ENCODE measurements at regions of chr13 and their contacts with region 1.

Region 1: GRCh38 chr13:79538757-79539156 is 57.8 kb downstream of the NDFIP2 start:
- DNase-seq: no peak
- H3K4me3 ChIP-seq: no peak overlapping the region
- H3K27ac ChIP-seq: no peak overlapping the region
- H3K4me1 ChIP-seq: peaks cover 0 to 4% (median 0%) of the 10 kb centered on the region in 4 donors
- H3K27me3 ChIP-seq: no peaks in the 10 kb centered on the region
- CTCF ChIP-seq: no peak
- EP300 ChIP-seq: no peak
- POLR2A ChIP-seq: no peak

Region 2: DNA sequence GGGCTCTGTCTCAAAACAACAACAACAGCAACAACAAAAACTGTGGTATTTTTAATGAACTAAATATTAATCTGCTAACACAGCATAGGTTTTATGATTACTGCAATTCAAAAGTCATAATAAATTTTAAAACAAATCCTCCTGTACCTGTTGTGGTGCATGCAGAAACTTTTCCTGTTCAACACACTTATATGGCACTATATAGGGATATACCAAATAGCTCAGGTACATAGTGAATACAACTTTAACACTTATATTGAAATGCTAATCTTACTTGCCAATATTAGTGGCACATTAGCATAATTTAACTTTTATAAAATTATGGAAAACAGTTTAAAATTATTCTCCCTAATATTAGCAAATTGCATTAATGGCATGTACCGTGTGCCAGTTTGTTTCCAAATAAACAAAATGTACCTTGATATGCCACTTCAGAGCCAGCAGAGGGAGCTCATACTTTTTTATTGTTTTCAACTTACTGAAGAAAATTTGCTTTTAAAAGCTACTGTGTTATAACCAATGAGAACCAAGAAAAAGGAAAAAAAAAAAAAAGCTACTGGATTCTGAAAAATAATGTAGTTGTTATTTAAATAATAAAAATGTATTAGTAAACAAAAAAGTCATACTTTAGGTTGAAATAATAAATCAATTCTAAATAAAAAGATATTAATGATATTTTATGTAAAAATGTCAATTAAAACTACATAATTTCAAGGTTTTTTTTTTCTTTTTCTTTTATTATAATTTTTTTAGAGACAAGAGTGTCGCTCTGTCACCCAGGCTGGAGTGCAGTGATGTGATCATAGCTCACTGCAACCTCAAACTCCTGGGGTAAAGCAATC is 114.7 kb before region 1 on chr13:
- intact Hi-C with region 1: loop called (anchors 5 kb)
- DNase-seq: peak in 1 of 2 donors; percentile 70
- H3K4me3 ChIP-seq: no peak overlapping the region
- H3K27ac ChIP-seq: no peak overlapping the region
- H3K4me1 ChIP-seq: peaks cover 0 to 3% (median 0%) of the 10 kb centered on the region in 4 donors
- H3K27me3 ChIP-seq: no peaks in the 10 kb centered on the region
- CTCF ChIP-seq: peak in 5 of 7 experiments; percentile 38 to 74 (median 64)
- EP300 ChIP-seq: no peak
- POLR2A ChIP-seq: no peak

Measured in stomach (tissue), 19 donors.